Sigmoid colon (tissue), 7 donors: ENCODE measurements at regions of chr14 and their contacts with region 1.

Region 1: DNA sequence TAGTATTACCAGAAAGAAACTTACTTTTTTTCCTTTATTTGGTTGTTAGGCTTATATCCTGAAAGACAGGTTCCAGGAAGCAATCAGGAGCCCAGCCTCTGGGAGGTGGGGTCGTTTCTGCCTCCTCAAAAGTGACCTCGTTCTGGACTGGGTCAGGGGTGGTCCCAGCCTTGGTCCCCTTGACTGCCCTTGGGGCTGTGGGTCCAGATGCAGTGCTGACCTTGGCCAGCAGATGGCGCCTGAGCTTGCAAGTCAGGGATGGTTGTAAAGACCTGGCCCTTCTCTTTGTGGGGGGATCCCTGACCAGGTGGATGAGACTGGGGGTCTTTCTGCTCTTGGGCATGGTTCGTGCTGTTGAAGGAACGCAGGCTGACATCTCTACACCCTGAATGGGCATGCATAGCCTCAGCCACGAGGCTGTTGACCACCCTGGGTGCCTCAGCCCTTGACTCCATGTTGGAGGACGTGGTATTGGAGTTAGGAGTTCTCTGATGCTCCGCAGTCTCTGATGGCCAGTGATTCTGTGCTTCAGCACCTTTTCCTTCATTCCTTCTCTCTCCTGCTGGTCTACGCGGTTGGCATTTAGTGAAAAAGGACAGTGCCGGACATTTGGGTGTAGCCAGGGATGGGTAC is 62.4 kb downstream of the ADCK1 start:
- DNase-seq: peak; percentile 74
- H3K4me3 ChIP-seq: no peak overlapping the region
- H3K27ac ChIP-seq: no peak overlapping the region
- H3K4me1 ChIP-seq: no peaks in the 10 kb centered on the region
- H3K27me3 ChIP-seq: no peaks in the 10 kb centered on the region
- CTCF ChIP-seq: peak; percentile 28 to 88 (median 71)
- EP300 ChIP-seq: no peak
- POLR2A ChIP-seq: no peak

Region 2: GRCh38 chr14:78566026-78566858 is 704.0 kb after region 1 on chr14:
- intact Hi-C with region 1: loop called (anchors 2 kb)
- DNase-seq: peak; percentile 72
- H3K4me3 ChIP-seq: peak overlapping the region in 2 of 4 donors; percentile 25 to 36
- H3K27ac ChIP-seq: no peak overlapping the region
- H3K4me1 ChIP-seq: no peaks in the 10 kb centered on the region
- H3K27me3 ChIP-seq: no peaks in the 10 kb centered on the region
- CTCF ChIP-seq: peak in 3 of 4 experiments; percentile 26 to 53 (median 44)
- EP300 ChIP-seq: no peak
- POLR2A ChIP-seq: no peak

Region 3: DNA sequence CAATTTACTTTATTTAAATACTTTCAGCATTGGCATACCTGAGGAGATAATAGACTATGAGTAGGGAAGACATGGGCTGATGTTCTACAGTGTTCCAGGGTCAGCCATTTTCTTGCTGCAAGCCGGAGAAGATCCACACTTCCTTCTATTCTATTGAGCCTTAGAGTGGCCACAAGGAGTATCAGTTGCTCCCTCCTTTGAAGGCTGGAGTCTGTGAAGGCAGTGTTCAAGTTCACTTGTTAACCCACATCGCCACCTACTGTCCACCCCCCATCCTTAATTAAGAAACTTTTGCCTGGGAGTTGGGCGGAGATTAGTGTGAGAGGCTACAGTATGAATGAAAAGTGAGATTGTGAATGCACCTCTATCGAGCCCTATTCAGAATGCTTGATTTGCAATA is 974.5 kb after region 1 on chr14:
- intact Hi-C with region 1: loop called (anchors 5 kb)
- DNase-seq: no peak
- H3K4me3 ChIP-seq: no peak overlapping the region
- H3K27ac ChIP-seq: no peak overlapping the region
- H3K4me1 ChIP-seq: no peaks in the 10 kb centered on the region
- H3K27me3 ChIP-seq: peaks cover 0 to 8% (median 0%) of the 10 kb centered on the region in 3 donors
- CTCF ChIP-seq: peak in 2 of 4 experiments; percentile 23 to 42
- EP300 ChIP-seq: no peak
- POLR2A ChIP-seq: no peak